Colonic mucosa (tissue), 4 donors: ENCODE measurements at regions of chr15 and their contacts with region 1.

Region 1: DNA sequence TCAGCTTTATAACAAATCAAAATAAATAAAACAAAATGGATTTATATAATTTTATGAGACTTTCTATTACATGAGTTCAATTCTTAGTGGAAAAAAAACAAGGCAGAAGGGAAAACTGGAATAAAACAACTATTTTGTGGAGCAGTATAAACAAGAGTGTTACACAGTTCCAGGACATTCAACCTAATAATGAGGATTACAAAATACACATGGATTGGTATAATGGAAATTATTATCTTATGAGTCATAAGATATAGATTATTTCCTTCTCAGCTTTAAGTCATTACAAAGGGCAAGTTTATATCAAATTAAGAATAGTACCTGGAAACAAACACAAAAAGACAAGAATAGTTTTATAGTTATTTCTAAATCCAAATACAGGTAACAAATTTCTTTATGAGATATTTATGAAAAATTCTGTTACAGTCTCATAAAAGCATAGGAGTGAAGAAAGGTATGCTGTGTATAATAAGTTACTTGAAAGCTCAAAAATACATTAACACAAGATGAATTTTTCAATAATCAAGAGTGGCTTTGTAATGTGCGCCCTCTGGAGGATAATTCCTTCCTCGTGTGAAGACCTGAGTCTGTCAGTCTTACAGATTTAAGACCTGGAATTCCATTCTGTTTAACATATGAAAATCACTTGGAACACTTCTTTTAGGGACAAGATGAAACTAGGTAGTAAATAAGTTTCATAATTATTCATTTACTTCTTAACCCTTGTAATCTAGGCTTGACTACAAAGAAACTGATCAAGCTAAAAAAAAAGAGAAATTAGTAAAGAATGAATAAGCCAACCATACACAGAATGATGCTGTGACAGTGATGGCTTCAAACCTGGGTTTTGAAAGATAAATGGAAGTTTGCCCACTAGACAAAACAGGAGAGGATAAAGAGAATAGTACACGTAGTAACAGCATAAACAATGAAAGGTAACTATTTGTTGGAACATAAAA is 9.5 kb downstream of the COPS2 start:
- DNase-seq: peak; percentile 52
- H3K4me3 ChIP-seq: no peak overlapping the region
- H3K27ac ChIP-seq: no peak overlapping the region
- H3K4me1 ChIP-seq: no peaks in the 10 kb centered on the region
- H3K27me3 ChIP-seq: no peaks in the 10 kb centered on the region
- CTCF ChIP-seq: peak; percentile 66

Region 2: GRCh38 chr15:48861813-48862431 is 284.0 kb before region 1 on chr15:
- intact Hi-C with region 1: loop called (anchors 10 kb)
- DNase-seq: peak; percentile 40
- H3K4me3 ChIP-seq: no peak overlapping the region
- H3K27ac ChIP-seq: no peak overlapping the region
- H3K4me1 ChIP-seq: no peaks in the 10 kb centered on the region
- H3K27me3 ChIP-seq: no peaks in the 10 kb centered on the region
- CTCF ChIP-seq: peak; percentile 83